Aorta (tissue), 5 donors: ENCODE measurements at regions of chr5 and their contacts with region 1.

Region 1: DNA sequence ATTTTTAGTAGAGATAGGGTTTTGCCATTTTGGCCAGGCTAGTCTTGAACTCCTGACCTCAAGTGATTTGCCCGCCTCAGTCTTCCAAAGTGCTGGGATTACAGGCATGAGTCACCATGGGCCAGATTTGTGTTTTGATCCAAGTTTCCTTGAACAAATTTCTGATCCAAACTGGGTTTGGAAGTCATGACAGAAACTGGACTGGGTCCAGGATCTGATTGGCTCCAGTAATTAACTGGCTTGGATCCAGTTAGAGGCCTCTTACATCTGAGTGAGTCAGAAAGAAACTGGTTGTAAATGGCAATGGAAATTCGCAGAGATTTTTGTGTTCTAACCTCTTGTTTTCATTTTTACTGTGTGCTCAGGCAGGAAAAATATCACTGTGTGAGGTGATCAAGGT is 141.6 kb downstream of the SLC25A46 start:
- DNase-seq: peak in 1 of 2 donors; percentile 68
- ATAC-seq: peak; percentile 50
- H3K4me3 ChIP-seq: no peak overlapping the region
- H3K27ac ChIP-seq: no peak overlapping the region
- H3K4me1 ChIP-seq: no peaks in the 10 kb centered on the region
- H3K27me3 ChIP-seq: no peaks in the 10 kb centered on the region

Region 2: DNA sequence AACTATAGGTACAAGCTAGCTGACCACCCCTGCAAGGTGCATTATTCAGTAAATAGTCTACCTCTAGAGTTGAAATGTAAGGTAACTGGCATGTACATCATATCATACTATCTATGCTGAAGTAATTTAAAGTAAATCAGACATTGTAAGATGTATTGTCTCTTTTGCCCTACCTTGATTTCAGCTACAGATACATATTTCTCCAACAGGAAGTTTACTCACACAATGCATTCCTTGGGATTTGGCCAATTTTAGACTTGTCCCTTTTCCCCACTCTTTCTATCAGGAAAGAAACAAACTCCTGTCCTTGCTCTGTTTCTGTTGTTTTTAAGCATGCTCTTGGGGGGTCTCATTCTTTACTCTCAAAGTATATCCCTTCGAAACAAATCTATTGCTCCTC is 132.6 kb after region 1 on chr5:
- intact Hi-C with region 1: no loop called
- DNase-seq: no peak
- ATAC-seq: no peak
- H3K4me3 ChIP-seq: no peak overlapping the region
- H3K27ac ChIP-seq: no peak overlapping the region
- H3K4me1 ChIP-seq: no peaks in the 10 kb centered on the region
- H3K27me3 ChIP-seq: no peaks in the 10 kb centered on the region

Region 3: GRCh38 chr5:111072949-111073682 is 192.7 kb after region 1 on chr5:
- intact Hi-C with region 1: loop called in 1 of 2 experiments (anchors 5 kb)
- DNase-seq: peak; percentile 71 to 90
- ATAC-seq: peak; percentile 68
- H3K4me3 ChIP-seq: peak overlapping the region; percentile 71 to 87
- H3K27ac ChIP-seq: no peak overlapping the region
- H3K4me1 ChIP-seq: peaks cover 0 to 5% of the 10 kb centered on the region in 2 donors
- H3K27me3 ChIP-seq: no peaks in the 10 kb centered on the region